ENCODE measurements at regions of chr5 and their contacts with region 1.

Region 1: GRCh38 chr5:88690409-88691229 is 192.4 kb downstream of the MEF2C start:
- DNase-seq: peak; percentile 76
- ATAC-seq: peak; percentile 67
- H3K4me3 Mint-ChIP-seq: peak overlapping the region; percentile 40
- H3K27ac Mint-ChIP-seq: peak overlapping the region; percentile 84
- H3K4me1 Mint-ChIP-seq: peaks cover 7% of the 10 kb centered on the region
- H3K27me3 Mint-ChIP-seq: peaks cover 97% of the 10 kb centered on the region

Region 2: DNA sequence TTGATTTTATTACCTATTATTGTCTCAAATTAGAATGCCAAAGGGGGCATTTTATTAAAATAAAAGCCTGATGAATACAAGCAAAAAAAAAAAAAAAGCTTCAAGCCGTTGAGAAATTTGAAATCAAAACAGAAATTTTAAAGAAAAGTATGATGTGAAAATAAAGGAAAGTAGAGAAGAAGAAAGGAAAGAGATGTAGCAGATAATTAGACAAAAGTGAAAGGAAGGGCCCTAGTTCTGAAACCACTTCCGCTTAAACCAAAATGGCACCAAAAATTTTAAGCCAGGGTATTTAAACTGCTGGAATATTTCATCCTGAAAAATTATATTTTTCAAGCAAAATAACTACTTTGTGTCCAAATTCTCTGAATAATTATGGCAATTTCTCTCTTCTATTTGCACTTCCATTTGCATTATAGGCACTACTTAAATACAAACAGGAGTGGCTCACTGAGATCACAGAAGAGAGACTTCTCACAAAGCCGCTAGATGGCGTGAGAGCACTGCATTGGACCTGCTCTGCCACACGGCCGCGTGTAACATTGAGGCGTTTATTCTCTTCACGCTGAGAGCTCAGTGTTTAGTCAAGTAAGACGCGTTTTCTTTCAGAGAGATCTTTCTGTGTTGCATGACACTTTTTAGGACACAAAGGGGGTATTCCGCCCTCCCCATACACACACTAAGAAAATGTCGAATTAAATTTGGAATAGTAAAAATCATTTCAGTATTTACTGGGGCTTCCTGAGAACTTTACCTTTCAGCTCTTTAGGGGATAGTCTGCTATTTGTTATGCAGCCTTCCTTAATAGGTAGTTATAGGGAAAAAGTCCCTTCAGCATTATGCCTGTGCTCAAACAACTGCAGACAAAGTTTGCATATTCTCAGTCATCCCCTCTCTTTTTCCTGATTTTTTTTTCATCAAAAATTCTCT is 909.5 kb before region 1 on chr5:
- CTCF ChIA-PET with region 1: interaction called, 78 read pairs
- DNase-seq: peak; percentile 82
- ATAC-seq: peak; percentile 98
- H3K4me3 Mint-ChIP-seq: no peak overlapping the region
- H3K27ac Mint-ChIP-seq: no peak overlapping the region
- H3K4me1 Mint-ChIP-seq: peaks cover 4% of the 10 kb centered on the region
- H3K27me3 Mint-ChIP-seq: peaks cover 21% of the 10 kb centered on the region

Region 3: DNA sequence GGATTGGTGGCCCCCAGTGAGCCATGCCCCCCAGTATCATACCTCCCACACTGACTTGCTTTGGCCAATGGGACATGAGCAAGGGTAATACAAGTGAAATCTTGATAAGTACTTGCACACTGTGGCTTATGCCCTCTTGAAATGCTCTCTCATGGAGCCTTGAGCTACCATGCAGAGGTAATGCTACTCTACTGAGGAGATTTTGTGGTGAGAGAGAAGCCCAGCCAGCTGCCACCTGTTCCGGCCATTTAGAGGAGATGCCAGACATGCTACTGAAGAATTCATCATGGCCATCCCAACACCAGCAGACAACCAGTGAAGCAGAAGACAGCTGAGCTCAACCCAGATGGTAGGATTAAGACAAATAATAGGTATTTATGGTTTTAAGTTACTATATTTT is 107.1 kb before region 1 on chr5:
- CTCF ChIA-PET with region 1: no interaction called
- DNase-seq: no peak
- ATAC-seq: no peak
- H3K4me3 Mint-ChIP-seq: no peak overlapping the region
- H3K27ac Mint-ChIP-seq: no peak overlapping the region
- H3K4me1 Mint-ChIP-seq: no peaks in the 10 kb centered on the region
- H3K27me3 Mint-ChIP-seq: no peaks in the 10 kb centered on the region

Region 4: GRCh38 chr5:88660947-88661805 is 29.4 kb before region 1 on chr5:
- CTCF ChIA-PET with region 1: interaction called, 23 read pairs
- DNase-seq: peak; percentile 60
- ATAC-seq: peak; percentile 77
- H3K4me3 Mint-ChIP-seq: peak overlapping the region; percentile 62
- H3K27ac Mint-ChIP-seq: peak overlapping the region; percentile 64
- H3K4me1 Mint-ChIP-seq: peaks cover 16% of the 10 kb centered on the region
- H3K27me3 Mint-ChIP-seq: peaks cover 77% of the 10 kb centered on the region

Region 5: DNA sequence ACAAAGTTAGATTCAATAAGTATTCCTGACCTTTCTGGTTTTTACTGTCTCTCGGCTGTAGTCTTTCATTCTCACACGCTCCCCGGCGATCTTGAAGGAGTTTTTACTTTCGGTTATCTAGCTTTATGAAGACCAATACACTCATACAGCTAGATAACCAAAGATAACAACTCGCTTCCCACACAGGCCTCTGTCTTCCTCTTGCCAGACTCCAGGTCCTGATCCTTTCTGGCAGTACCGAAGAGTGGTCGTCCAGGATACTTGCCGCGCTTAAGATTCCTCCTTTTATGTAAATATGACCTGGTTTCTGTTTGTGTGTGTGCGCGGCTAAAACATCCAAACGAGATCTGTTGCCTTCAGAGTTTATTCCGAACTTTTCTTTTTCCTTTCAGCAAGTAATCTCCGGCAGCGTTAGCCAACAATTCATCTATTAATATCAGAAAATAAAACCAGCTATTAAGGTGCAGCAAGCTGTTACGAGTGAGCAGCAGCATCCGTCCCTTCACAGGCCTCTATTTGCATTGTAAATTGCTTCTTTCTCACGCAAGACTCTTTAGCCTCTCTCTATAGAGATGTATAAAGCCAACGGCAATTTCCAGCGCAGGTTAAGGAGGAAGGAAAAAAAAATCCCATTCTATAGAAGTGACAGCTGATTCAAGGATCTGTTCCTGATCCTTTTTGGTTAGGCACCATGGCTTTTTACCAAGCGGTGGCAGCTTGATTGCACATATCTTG is 23.7 kb before region 1 on chr5:
- CTCF ChIA-PET with region 1: interaction called, 17 read pairs
- DNase-seq: no peak
- ATAC-seq: peak; percentile 55
- H3K4me3 Mint-ChIP-seq: peak overlapping the region; percentile 77
- H3K27ac Mint-ChIP-seq: peak overlapping the region; percentile 7
- H3K4me1 Mint-ChIP-seq: peaks cover 25% of the 10 kb centered on the region
- H3K27me3 Mint-ChIP-seq: peaks cover 87% of the 10 kb centered on the region

Region 6: GRCh38 chr5:88673253-88674105 is 17.1 kb before region 1 on chr5:
- CTCF ChIA-PET with region 1: interaction called, 13 read pairs
- DNase-seq: no peak
- ATAC-seq: no peak
- H3K4me3 Mint-ChIP-seq: peak overlapping the region; percentile 42
- H3K27ac Mint-ChIP-seq: peak overlapping the region; percentile 64
- H3K4me1 Mint-ChIP-seq: peaks cover 15% of the 10 kb centered on the region
- H3K27me3 Mint-ChIP-seq: peaks cover 88% of the 10 kb centered on the region

Region 7: GRCh38 chr5:88680253-88681132 is 10.1 kb before region 1 on chr5:
- CTCF ChIA-PET with region 1: interaction called, 20 read pairs
- DNase-seq: peak; percentile 82
- ATAC-seq: peak; percentile 96
- H3K4me3 Mint-ChIP-seq: no peak overlapping the region
- H3K27ac Mint-ChIP-seq: no peak overlapping the region
- H3K4me1 Mint-ChIP-seq: peaks cover 7% of the 10 kb centered on the region
- H3K27me3 Mint-ChIP-seq: peaks cover 84% of the 10 kb centered on the region